ENCODE measurements at regions of chr3 and their contacts with region 1.

Region 1: GRCh38 chr3:153768561-153769469 is 352.4 kb upstream of the ARHGEF26 start:
- DNase-seq: peak; percentile 59
- H3K4me3 Mint-ChIP-seq: no peak overlapping the region
- H3K27ac Mint-ChIP-seq: no peak overlapping the region
- H3K4me1 Mint-ChIP-seq: peaks cover 6% of the 10 kb centered on the region
- H3K27me3 Mint-ChIP-seq: no peaks in the 10 kb centered on the region
- CTCF ChIP-seq: peak; percentile 81

Region 2: DNA sequence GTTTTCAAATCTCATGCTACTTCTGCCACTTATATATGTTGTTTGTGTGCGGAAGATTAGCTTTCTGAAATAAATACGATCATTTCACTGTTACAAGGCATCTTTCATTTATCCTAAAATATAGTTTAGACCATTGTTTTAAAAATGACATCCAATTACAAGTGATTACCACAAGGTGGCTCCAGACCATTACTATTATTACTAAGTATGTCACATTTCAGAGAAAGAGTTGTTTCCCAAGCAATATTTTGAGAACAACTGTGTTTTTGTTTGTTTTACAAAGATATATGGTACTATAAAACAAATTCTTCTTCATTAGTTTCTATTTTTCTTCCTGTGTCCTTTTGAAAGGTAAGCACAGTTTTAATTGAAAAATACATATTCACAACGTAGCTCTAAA is 742.8 kb before region 1 on chr3:
- CTCF ChIA-PET with region 1: interaction called, 3 read pairs
- POLR2A ChIA-PET with region 1: no interaction called
- intact Hi-C with region 1: loop called (anchors 1 kb)
- DNase-seq: peak; percentile 57
- H3K4me3 Mint-ChIP-seq: no peak overlapping the region
- H3K27ac Mint-ChIP-seq: no peak overlapping the region
- H3K4me1 Mint-ChIP-seq: no peaks in the 10 kb centered on the region
- H3K27me3 Mint-ChIP-seq: no peaks in the 10 kb centered on the region
- CTCF ChIP-seq: peak; percentile 62

Region 3: GRCh38 chr3:153043729-153044328 is 725.0 kb before region 1 on chr3:
- CTCF ChIA-PET with region 1: interaction called, 4 read pairs
- POLR2A ChIA-PET with region 1: no interaction called
- intact Hi-C with region 1: loop called (anchors 1 kb)
- DNase-seq: peak; percentile 86
- H3K4me3 Mint-ChIP-seq: peak overlapping the region; percentile 63
- H3K27ac Mint-ChIP-seq: peak overlapping the region; percentile 82
- H3K4me1 Mint-ChIP-seq: peaks cover 8% of the 10 kb centered on the region
- H3K27me3 Mint-ChIP-seq: no peaks in the 10 kb centered on the region
- CTCF ChIP-seq: no peak

Region 4: DNA sequence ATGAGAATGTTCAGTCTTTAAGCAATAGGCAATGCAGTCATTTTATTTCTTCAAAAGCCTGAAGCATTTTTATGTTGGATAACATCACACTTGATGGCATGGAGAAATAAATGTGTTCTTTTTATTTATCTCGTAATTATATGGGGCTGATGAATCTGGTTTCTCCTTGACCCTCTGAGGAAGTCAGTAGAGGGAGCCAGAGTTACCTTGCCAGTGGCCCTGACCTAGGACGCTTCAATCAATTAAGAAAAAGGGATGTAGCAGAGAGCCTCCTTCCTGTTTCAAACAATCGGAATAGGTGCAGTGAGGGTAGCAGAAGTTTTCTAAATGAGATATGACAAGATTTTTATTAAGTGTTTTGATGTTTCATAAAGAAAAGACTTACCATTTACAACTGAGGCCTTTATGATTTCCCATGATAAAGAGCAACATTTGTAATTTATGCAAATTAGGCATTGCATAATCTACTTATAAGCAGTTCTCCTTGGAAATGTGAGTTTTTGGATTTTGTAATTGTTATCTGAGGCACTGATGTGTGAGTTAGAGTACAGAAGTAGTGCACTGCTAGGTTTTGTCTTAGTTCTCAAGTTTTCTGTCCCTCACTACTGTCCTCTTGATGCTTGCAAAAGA is 477.6 kb before region 1 on chr3:
- CTCF ChIA-PET with region 1: interaction called, 15 read pairs
- POLR2A ChIA-PET with region 1: interaction called, 3 read pairs
- intact Hi-C with region 1: loop called (anchors 1 kb)
- DNase-seq: peak; percentile 65
- H3K4me3 Mint-ChIP-seq: no peak overlapping the region
- H3K27ac Mint-ChIP-seq: no peak overlapping the region
- H3K4me1 Mint-ChIP-seq: peaks cover 40% of the 10 kb centered on the region
- H3K27me3 Mint-ChIP-seq: no peaks in the 10 kb centered on the region
- CTCF ChIP-seq: peak; percentile 52

Region 5: GRCh38 chr3:153704115-153704514 is 64.7 kb before region 1 on chr3:
- CTCF ChIA-PET with region 1: interaction called, 3 read pairs
- POLR2A ChIA-PET with region 1: no interaction called
- intact Hi-C with region 1: loop called (anchors 1 kb)
- DNase-seq: peak; percentile 20
- H3K4me3 Mint-ChIP-seq: no peak overlapping the region
- H3K27ac Mint-ChIP-seq: no peak overlapping the region
- H3K4me1 Mint-ChIP-seq: no peaks in the 10 kb centered on the region
- H3K27me3 Mint-ChIP-seq: no peaks in the 10 kb centered on the region
- CTCF ChIP-seq: peak; percentile 8

Region 6: DNA sequence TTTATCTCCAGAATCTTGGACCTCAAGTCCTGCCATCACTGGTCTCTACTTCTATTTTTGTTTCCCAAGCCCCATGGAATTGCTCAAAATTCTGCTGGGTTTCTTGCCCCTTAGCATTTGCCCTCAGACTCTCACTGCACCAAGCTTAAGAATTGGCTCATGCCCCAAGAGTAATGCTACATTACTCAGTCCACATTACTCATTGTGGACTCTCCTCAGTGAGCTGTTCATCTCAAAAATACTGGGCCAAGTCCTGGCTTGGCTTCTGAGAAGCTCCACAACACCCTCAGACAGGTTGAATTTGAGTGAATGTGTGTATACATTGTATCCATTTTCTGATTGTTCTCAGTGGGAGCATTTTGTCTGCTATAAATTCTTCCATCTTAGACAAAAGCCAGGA is 12.0 kb before region 1 on chr3:
- CTCF ChIA-PET with region 1: interaction called, 25 read pairs
- POLR2A ChIA-PET with region 1: no interaction called
- intact Hi-C with region 1: no loop called
- DNase-seq: peak; percentile 24
- H3K4me3 Mint-ChIP-seq: no peak overlapping the region
- H3K27ac Mint-ChIP-seq: no peak overlapping the region
- H3K4me1 Mint-ChIP-seq: peaks cover 10% of the 10 kb centered on the region
- H3K27me3 Mint-ChIP-seq: no peaks in the 10 kb centered on the region
- CTCF ChIP-seq: no peak

Region 7: DNA sequence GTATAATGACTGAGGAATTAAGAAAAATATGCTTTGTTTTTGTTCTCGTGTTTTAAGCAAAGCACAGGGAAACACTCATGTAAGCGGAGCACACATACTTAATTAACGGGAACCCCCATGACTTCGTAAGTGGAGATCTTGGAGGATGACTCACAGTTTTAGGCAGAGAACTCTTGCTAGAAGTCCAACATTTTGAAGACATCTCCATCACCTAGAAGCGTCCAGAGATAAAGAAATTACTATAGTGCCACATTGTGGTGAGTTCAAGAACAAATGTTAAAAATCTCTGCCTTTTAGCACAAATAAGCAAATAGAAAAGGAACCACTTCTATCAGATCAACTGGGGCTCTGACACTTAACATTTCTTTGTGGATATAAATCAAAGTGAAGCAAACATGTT is 158.3 kb after region 1 on chr3:
- CTCF ChIA-PET with region 1: interaction called, 3 read pairs
- POLR2A ChIA-PET with region 1: no interaction called
- intact Hi-C with region 1: loop called (anchors 5 kb)
- DNase-seq: peak; percentile 72
- H3K4me3 Mint-ChIP-seq: no peak overlapping the region
- H3K27ac Mint-ChIP-seq: no peak overlapping the region
- H3K4me1 Mint-ChIP-seq: no peaks in the 10 kb centered on the region
- H3K27me3 Mint-ChIP-seq: no peaks in the 10 kb centered on the region
- CTCF ChIP-seq: peak; percentile 11

Region 8: GRCh38 chr3:153952091-153952490 is 183.3 kb after region 1 on chr3:
- CTCF ChIA-PET with region 1: no interaction called
- POLR2A ChIA-PET with region 1: no interaction called
- intact Hi-C with region 1: no loop called
- DNase-seq: no peak
- H3K4me3 Mint-ChIP-seq: no peak overlapping the region
- H3K27ac Mint-ChIP-seq: no peak overlapping the region
- H3K4me1 Mint-ChIP-seq: no peaks in the 10 kb centered on the region
- H3K27me3 Mint-ChIP-seq: no peaks in the 10 kb centered on the region
- CTCF ChIP-seq: no peak

Measured in MCF 10A (cell line).